ENCODE measurements at regions of chr14 and their contacts with region 1.

Region 1: GRCh38 chr14:30339311-30339901 is 219.6 kb upstream of the G2E3 start:
- DNase-seq: no peak
- H3K4me3 ChIP-seq: no peak overlapping the region
- H3K4me3 Mint-ChIP-seq: no peak overlapping the region
- H3K27ac Mint-ChIP-seq: no peak overlapping the region
- H3K4me1 ChIP-seq: no peaks in the 10 kb centered on the region
- H3K4me1 Mint-ChIP-seq: peaks cover 11% of the 10 kb centered on the region
- H3K27me3 ChIP-seq: no peaks in the 10 kb centered on the region
- H3K27me3 Mint-ChIP-seq: no peaks in the 10 kb centered on the region
- CTCF ChIP-seq: no peak

Region 2: GRCh38 chr14:30355431-30355913 is 16.1 kb after region 1 on chr14:
- CTCF ChIA-PET with region 1: no interaction called
- POLR2A ChIA-PET with region 1: no interaction called
- intact Hi-C with region 1: loop called (anchors 2 kb)
- DNase-seq: peak in 1 of 2 experiments; percentile 13
- H3K4me3 ChIP-seq: no peak overlapping the region
- H3K4me3 Mint-ChIP-seq: no peak overlapping the region
- H3K27ac Mint-ChIP-seq: no peak overlapping the region
- H3K4me1 ChIP-seq: no peaks in the 10 kb centered on the region
- H3K4me1 Mint-ChIP-seq: peaks cover 12% of the 10 kb centered on the region
- H3K27me3 ChIP-seq: no peaks in the 10 kb centered on the region
- H3K27me3 Mint-ChIP-seq: no peaks in the 10 kb centered on the region
- CTCF ChIP-seq: no peak

Measured in Caco-2 (cell line).